ENCODE measurements at regions of chr11 and their contacts with region 1.

Region 1: GRCh38 chr11:44538375-44539054 is 26.9 kb upstream of the CD82 start:
- DNase-seq: peak; percentile 86
- CTCF ChIP-seq: peak; percentile 87

Region 2: DNA sequence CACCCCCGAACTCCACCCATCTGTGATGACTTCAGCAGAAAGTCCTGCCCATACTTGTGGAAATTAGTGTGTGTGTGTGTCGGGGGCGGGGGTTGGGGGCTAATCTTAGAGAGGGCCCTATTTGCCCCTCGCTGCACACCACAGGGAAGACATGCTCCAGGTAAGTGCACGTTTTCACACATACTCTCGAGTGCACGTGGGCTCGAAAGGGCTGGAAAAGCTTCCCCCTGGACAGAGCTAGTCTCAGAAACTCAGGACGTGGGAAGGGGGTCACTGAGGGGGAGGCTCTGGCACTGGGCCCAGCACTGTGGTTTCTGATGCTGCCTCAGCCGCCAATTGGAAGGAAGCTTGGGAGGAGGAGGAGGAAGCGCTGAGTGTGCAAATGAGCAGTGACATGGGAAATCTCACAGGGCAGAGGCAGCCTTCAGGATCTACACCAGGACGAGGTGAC is 13.7 kb before region 1 on chr11:
- CTCF ChIA-PET with region 1: interaction called, 29 read pairs
- POLR2A ChIA-PET with region 1: no interaction called
- DNase-seq: no peak
- CTCF ChIP-seq: no peak

Measured in GM10248 (cell line).